ENCODE measurements at regions of chr2 and their contacts with region 1.

Region 1: DNA sequence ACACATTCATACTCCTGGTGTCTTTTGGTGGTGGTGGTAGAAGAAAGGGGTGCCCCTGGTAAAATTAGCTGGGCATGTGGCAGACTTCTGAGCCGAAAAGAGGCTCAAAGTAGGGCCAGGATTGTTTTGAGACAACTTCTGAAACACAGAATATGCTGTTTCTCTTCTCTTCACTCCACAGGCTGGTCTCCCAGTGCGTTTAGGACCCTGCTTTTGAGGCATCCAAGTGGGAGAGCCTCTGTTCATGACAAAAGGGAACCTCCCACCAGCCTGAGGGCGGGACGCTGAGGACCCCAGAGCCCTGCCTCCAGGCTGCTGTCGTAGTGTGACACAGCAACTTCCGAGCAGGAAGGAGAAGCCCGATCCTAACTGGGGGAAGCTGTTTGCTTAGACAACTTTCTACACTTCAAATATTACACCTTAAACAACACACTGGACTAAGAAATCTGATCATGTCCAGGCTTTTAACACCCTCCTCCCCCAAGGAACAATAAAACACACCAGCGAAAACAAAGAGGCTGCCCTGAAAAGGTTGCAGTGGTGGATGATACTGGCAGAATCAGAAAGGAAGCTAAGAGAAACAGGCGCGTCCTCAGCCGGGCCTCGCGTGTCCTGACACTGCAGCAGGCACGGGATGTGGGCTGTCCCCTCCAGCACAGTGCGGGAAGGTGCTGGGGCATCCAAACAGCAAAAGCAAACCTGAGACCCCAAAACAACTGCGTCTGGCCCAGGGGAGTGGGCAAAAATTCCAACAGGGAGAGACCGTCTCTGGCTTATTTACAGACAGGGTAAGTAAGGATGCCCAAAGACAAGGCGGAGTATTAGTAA is 9.3 kb downstream of the SERTAD2 start:
- DNase-seq: peak in 7 of 9 experiments; percentile 45 to 80 (median 66)
- ATAC-seq: peak; percentile 74
- H3K4me3 ChIP-seq: peak overlapping the region; percentile 42 to 47
- H3K4me3 Mint-ChIP-seq: peak overlapping the region; percentile 89
- H3K27ac ChIP-seq: peak overlapping the region; percentile 50 to 82
- H3K27ac Mint-ChIP-seq: peak overlapping the region; percentile 93
- H3K4me1 ChIP-seq: peaks cover 71% of the 10 kb centered on the region
- H3K4me1 Mint-ChIP-seq: peaks cover 94% of the 10 kb centered on the region
- H3K27me3 ChIP-seq: no peaks in the 10 kb centered on the region
- H3K27me3 Mint-ChIP-seq: no peaks in the 10 kb centered on the region
- CTCF ChIP-seq: no peak

Region 2: GRCh38 chr2:64593035-64593655 is 51.2 kb before region 1 on chr2:
- CTCF ChIA-PET with region 1: interaction called, 10 read pairs
- POLR2A ChIA-PET with region 1: interaction called, 3 read pairs
- intact Hi-C with region 1: loop called in 1 of 2 experiments (anchors 2 kb)
- DNase-seq: no peak
- ATAC-seq: no peak
- H3K4me3 ChIP-seq: no peak overlapping the region
- H3K4me3 Mint-ChIP-seq: no peak overlapping the region
- H3K27ac ChIP-seq: no peak overlapping the region
- H3K27ac Mint-ChIP-seq: no peak overlapping the region
- H3K4me1 ChIP-seq: no peaks in the 10 kb centered on the region
- H3K4me1 Mint-ChIP-seq: no peaks in the 10 kb centered on the region
- H3K27me3 ChIP-seq: no peaks in the 10 kb centered on the region
- H3K27me3 Mint-ChIP-seq: no peaks in the 10 kb centered on the region
- CTCF ChIP-seq: no peak

Region 3: DNA sequence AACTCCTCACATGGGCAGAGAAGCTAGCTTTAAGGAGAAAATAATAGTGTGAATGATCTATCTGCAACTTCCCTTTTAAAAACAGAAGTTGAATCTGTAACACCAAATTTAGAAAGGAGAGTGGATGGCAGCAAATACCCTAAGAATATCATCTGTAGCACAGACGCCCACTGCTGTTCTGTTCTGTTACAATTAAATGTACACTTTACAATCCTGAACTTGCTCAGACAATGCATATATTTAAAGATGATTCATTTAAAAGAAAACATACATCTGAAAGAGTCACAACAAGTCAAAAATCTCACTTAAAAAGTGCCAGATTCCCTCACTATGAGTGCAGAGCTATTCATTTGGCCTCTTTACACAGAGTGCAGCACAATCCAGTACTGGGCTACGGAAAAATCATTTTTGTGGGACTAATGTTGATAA is 17.4 kb after region 1 on chr2:
- CTCF ChIA-PET with region 1: interaction called, 93 read pairs
- POLR2A ChIA-PET with region 1: interaction called, 3 read pairs
- intact Hi-C with region 1: no loop called
- DNase-seq: no peak
- ATAC-seq: no peak
- H3K4me3 ChIP-seq: no peak overlapping the region
- H3K4me3 Mint-ChIP-seq: no peak overlapping the region
- H3K27ac ChIP-seq: no peak overlapping the region
- H3K27ac Mint-ChIP-seq: peak overlapping the region; percentile 20
- H3K4me1 ChIP-seq: peaks cover 43% of the 10 kb centered on the region
- H3K4me1 Mint-ChIP-seq: peaks cover 69% of the 10 kb centered on the region
- H3K27me3 ChIP-seq: no peaks in the 10 kb centered on the region
- H3K27me3 Mint-ChIP-seq: no peaks in the 10 kb centered on the region
- CTCF ChIP-seq: no peak

Region 4: DNA sequence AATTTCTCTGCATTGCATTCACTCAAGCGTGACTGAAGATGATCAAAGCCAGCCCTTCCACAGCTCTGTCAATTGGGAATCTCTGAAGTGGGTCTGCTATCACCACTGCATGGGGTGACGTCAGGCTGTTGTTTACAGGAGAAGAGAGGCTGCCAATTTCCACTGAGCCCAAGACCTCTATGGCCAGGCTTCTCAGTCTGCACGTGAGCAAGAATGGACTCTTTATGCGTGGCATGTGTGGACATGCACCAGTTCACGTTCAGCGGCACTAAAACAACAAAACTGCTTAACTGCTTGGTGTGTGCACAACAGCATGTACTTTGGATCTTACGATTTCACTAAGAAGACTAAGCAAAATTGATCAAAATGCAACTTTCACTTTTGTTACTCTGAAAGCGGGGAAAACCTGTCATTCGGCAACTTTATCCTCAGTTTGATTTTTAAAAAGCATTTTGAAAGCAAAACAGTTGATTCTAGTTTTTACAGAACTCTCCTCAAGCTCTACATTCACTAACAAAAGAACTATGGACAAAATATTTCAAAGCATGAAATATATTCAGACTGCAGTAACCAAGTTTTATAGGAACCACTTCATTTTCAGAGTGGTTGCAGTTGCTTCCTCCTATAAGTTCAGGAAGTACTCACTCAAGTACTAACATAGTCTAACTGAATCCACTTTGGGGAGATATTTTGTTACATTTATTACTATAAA is 86.3 kb after region 1 on chr2:
- CTCF ChIA-PET with region 1: interaction called, 27 read pairs
- POLR2A ChIA-PET with region 1: interaction called, 4 read pairs
- intact Hi-C with region 1: loop called in 1 of 2 experiments (anchors 5 kb)
- DNase-seq: peak in 8 of 9 experiments; percentile 29 to 83 (median 58)
- ATAC-seq: peak; percentile 75
- H3K4me3 ChIP-seq: peak overlapping the region; percentile 32 to 51
- H3K4me3 Mint-ChIP-seq: peak overlapping the region; percentile 87
- H3K27ac ChIP-seq: peak overlapping the region; percentile 69 to 78
- H3K27ac Mint-ChIP-seq: peak overlapping the region; percentile 99
- H3K4me1 ChIP-seq: peaks cover 43% of the 10 kb centered on the region
- H3K4me1 Mint-ChIP-seq: peaks cover 61% of the 10 kb centered on the region
- H3K27me3 ChIP-seq: no peaks in the 10 kb centered on the region
- H3K27me3 Mint-ChIP-seq: no peaks in the 10 kb centered on the region
- CTCF ChIP-seq: no peak

Region 5: GRCh38 chr2:64819774-64820696 is 175.6 kb after region 1 on chr2:
- CTCF ChIA-PET with region 1: interaction called, 20 read pairs
- POLR2A ChIA-PET with region 1: no interaction called
- intact Hi-C with region 1: no loop called
- DNase-seq: peak in 8 of 9 experiments; percentile 39 to 82 (median 56)
- ATAC-seq: peak; percentile 98
- H3K4me3 ChIP-seq: peak overlapping the region; percentile 12 to 36
- H3K4me3 Mint-ChIP-seq: peak overlapping the region; percentile 73
- H3K27ac ChIP-seq: peak overlapping the region; percentile 60 to 72
- H3K27ac Mint-ChIP-seq: peak overlapping the region; percentile 93
- H3K4me1 ChIP-seq: peaks cover 28% of the 10 kb centered on the region
- H3K4me1 Mint-ChIP-seq: peaks cover 40% of the 10 kb centered on the region
- H3K27me3 ChIP-seq: no peaks in the 10 kb centered on the region
- H3K27me3 Mint-ChIP-seq: no peaks in the 10 kb centered on the region
- CTCF ChIP-seq: no peak

Region 6: DNA sequence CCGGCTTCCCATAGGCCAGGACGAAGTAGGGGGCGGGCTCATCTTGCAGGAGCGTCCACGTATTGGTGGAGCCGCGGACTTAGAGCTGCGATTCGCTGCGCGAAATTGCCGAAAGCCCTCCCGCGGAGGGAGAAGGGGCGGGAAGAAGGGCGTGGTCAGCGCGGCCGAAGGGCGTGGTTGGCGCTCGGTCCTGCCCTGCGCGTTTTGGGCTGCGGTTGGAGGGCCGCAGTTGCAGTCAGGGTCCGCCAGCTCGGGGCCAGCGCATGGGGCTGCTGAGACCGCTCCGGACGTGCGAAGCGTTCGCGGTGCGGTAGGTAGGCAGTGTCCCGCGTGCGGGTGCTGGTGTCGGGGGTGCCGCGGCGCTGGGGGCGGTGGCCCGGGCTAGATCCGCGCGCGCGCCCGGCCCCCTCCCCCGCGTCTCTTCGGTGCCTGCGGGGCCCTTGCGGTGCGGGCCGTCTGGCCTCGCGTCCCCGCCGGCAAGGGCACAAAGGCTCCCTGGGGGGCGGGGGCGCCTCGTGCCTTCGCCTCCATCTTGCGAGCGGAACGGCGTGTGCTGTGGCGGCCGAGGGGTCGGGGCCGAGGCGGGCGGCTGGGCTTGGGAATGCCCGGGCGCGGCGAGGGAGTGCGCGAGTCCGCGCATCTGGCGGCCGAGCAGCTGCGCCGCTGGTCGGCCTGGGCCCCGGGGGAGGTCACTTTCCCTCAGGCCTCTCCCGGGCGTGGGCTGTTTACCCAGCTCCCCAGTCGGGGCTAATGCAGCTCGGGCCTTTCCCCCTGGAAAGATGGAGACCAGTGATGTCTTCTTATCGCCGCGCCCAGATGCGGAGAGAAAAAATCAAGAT is 412.0 kb after region 1 on chr2 and contains the start of gene CEP68:
- CTCF ChIA-PET with region 1: no interaction called
- POLR2A ChIA-PET with region 1: no interaction called
- intact Hi-C with region 1: loop called in 1 of 2 experiments (anchors 5 kb)
- DNase-seq: peak; percentile 89 to 98 (median 96)
- ATAC-seq: peak; percentile 89
- H3K4me3 ChIP-seq: peak within 1 kb of the TSS; percentile 85 to 86
- H3K4me3 Mint-ChIP-seq: peak within 1 kb of the TSS; percentile 99
- H3K27ac ChIP-seq: peak within 1 kb of the TSS; percentile 62 to 72
- H3K27ac Mint-ChIP-seq: peak within 1 kb of the TSS; percentile 97
- H3K4me1 ChIP-seq: peaks cover 70% of the 10 kb centered on the region
- H3K4me1 Mint-ChIP-seq: peaks cover 73% of the 10 kb centered on the region
- H3K27me3 ChIP-seq: no peaks in the 10 kb centered on the region
- H3K27me3 Mint-ChIP-seq: no peaks in the 10 kb centered on the region
- CTCF ChIP-seq: no peak
- total RNA-seq, gene CEP68: 19.9 to 20.5 TPM